Activated CD4-positive, alpha-beta T cell treated with anti-CD3 and anti-CD28 coated beads for 36 hours (primary cell): ENCODE measurements at regions of chr3 and their contacts with region 1.

Region 1: DNA sequence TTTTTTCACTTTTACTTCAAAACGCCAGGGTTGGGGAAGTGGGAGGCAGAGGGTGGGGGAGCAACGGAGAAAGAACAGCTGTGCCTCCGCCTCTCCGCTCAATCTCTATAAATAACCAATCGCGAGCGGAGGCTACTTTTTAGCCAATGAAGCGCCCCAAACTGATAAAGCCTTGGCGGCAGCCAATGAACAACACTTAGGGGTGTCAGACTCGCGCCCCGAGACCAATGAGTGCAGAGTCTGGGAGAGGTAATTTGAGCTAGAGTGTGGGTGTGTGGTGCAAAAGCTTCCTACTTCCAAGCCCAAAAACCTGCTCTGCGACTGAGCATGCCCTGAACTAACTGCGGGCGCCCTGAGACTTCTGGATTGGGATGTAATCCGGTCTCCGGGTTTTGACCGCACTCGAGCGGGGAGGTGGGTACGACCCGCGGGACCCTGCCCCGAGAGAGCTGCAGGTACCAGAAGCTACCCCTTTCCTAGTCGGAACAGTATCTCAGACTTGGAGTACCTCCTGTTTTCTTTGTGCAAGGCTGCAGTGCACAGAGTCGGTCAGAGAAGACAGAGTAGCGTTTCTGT is 800 bp upstream of the RAP2B start:
- DNase-seq: peak; percentile 94
- ATAC-seq: peak; percentile 83
- H3K4me3 Mint-ChIP-seq: peak overlapping the region; percentile 97
- H3K27ac Mint-ChIP-seq: peak overlapping the region; percentile 97
- H3K4me1 Mint-ChIP-seq: peaks cover 32% of the 10 kb centered on the region
- H3K27me3 Mint-ChIP-seq: no peaks in the 10 kb centered on the region

Region 2: GRCh38 chr3:153001210-153002078 is 159.8 kb before region 1 on chr3:
- CTCF ChIA-PET with region 1: no interaction called
- POLR2A ChIA-PET with region 1: no interaction called
- intact Hi-C with region 1: no loop called
- DNase-seq: no peak
- ATAC-seq: no peak
- H3K4me3 Mint-ChIP-seq: no peak overlapping the region
- H3K27ac Mint-ChIP-seq: no peak overlapping the region
- H3K4me1 Mint-ChIP-seq: no peaks in the 10 kb centered on the region
- H3K27me3 Mint-ChIP-seq: peaks cover 2% of the 10 kb centered on the region

Region 3: GRCh38 chr3:153043729-153044328 is 117.4 kb before region 1 on chr3:
- CTCF ChIA-PET with region 1: interaction called, 6 read pairs
- POLR2A ChIA-PET with region 1: no interaction called
- intact Hi-C with region 1: loop called (anchors 1 kb)
- DNase-seq: no peak
- ATAC-seq: no peak
- H3K4me3 Mint-ChIP-seq: peak overlapping the region; percentile 32
- H3K27ac Mint-ChIP-seq: no peak overlapping the region
- H3K4me1 Mint-ChIP-seq: peaks cover 3% of the 10 kb centered on the region
- H3K27me3 Mint-ChIP-seq: peaks cover 2% of the 10 kb centered on the region

Region 4: GRCh38 chr3:153090973-153091372 is 70.3 kb before region 1 on chr3:
- CTCF ChIA-PET with region 1: no interaction called
- POLR2A ChIA-PET with region 1: no interaction called
- intact Hi-C with region 1: no loop called
- DNase-seq: no peak
- ATAC-seq: no peak
- H3K4me3 Mint-ChIP-seq: no peak overlapping the region
- H3K27ac Mint-ChIP-seq: no peak overlapping the region
- H3K4me1 Mint-ChIP-seq: peaks cover 21% of the 10 kb centered on the region
- H3K27me3 Mint-ChIP-seq: no peaks in the 10 kb centered on the region

Region 5: DNA sequence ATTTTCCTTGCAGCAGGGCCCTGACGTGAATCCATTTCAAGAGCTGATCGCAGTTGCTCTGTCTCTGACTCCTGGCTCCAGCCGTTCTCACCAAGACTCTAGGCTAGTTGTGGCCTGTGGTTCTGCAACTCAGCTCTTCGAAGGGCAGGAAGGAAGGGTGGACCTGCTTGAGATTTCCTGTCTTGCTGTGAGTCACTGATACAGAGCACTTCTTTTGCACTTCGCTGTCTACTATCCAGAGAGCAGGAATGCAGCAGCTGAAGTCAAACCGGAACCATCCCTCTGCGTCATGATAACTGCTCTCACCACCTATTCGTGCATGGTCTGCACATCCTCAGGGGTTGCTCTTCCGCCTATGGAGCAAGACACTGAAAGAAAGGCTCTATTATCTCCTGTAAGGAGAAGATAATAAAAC is 60.5 kb after region 1 on chr3:
- CTCF ChIA-PET with region 1: no interaction called
- POLR2A ChIA-PET with region 1: no interaction called
- intact Hi-C with region 1: loop called in 1 of 2 experiments (anchors 2 kb)
- DNase-seq: peak; percentile 68
- ATAC-seq: peak; percentile 97
- H3K4me3 Mint-ChIP-seq: peak overlapping the region; percentile 58
- H3K27ac Mint-ChIP-seq: peak overlapping the region; percentile 88
- H3K4me1 Mint-ChIP-seq: peaks cover 59% of the 10 kb centered on the region
- H3K27me3 Mint-ChIP-seq: no peaks in the 10 kb centered on the region

Region 6: DNA sequence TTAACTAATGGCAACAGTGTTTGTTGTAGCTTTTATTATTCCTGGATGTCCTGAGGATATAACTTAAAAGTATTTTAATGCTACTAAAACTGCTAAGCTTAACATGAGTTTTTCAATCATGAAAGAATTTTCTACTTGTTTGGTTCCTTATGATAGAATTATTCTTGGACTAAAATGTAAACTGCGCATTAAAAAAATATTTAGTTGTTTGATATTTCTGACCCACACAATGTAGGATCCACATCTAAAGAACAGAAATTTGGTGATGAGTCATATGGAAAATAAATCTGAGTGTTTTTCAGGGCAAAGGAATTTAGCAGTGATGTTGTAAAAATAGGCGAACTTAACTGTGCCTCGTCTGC is 71.7 kb after region 1 on chr3:
- CTCF ChIA-PET with region 1: no interaction called
- POLR2A ChIA-PET with region 1: no interaction called
- intact Hi-C with region 1: no loop called
- DNase-seq: no peak
- ATAC-seq: no peak
- H3K4me3 Mint-ChIP-seq: no peak overlapping the region
- H3K27ac Mint-ChIP-seq: no peak overlapping the region
- H3K4me1 Mint-ChIP-seq: peaks cover 8% of the 10 kb centered on the region
- H3K27me3 Mint-ChIP-seq: no peaks in the 10 kb centered on the region

Region 7: GRCh38 chr3:153350420-153350819 is 189.2 kb after region 1 on chr3:
- CTCF ChIA-PET with region 1: no interaction called
- POLR2A ChIA-PET with region 1: no interaction called
- intact Hi-C with region 1: loop called in 1 of 2 experiments (anchors 5 kb)
- DNase-seq: no peak
- ATAC-seq: peak; percentile 51
- H3K4me3 Mint-ChIP-seq: no peak overlapping the region
- H3K27ac Mint-ChIP-seq: no peak overlapping the region
- H3K4me1 Mint-ChIP-seq: peaks cover 2% of the 10 kb centered on the region
- H3K27me3 Mint-ChIP-seq: peaks cover 7% of the 10 kb centered on the region

Region 8: GRCh38 chr3:153595186-153595815 is 434.1 kb after region 1 on chr3:
- CTCF ChIA-PET with region 1: interaction called, 4 read pairs
- POLR2A ChIA-PET with region 1: no interaction called
- intact Hi-C with region 1: loop called in 1 of 2 experiments (anchors 10 kb)
- DNase-seq: no peak
- ATAC-seq: no peak
- H3K4me3 Mint-ChIP-seq: no peak overlapping the region
- H3K27ac Mint-ChIP-seq: no peak overlapping the region
- H3K4me1 Mint-ChIP-seq: no peaks in the 10 kb centered on the region
- H3K27me3 Mint-ChIP-seq: no peaks in the 10 kb centered on the region

Region 9: DNA sequence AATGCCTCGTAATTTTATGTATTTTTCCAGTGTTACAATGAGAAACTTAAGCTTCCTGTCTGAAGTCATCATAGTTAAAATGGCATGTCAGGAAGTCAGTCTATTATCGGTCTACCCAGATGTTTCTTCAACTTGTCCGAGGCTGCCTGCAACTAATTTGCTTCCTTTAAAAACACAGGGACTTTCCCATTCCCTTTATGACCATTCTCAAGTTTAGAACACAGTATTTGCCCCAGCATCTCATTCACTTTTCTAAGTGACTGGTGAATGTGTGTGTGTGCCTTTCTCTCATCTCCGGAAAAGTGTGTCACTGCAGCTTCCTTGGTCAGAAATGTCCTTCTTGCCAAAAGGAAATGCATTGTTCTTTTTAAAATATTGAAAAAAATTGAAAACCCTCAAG is 467.4 kb after region 1 on chr3:
- CTCF ChIA-PET with region 1: interaction called, 3 read pairs
- POLR2A ChIA-PET with region 1: no interaction called
- intact Hi-C with region 1: loop called in 1 of 2 experiments (anchors 5 kb)
- DNase-seq: peak; percentile 8
- ATAC-seq: peak; percentile 27
- H3K4me3 Mint-ChIP-seq: no peak overlapping the region
- H3K27ac Mint-ChIP-seq: peak overlapping the region; percentile 40
- H3K4me1 Mint-ChIP-seq: peaks cover 86% of the 10 kb centered on the region
- H3K27me3 Mint-ChIP-seq: no peaks in the 10 kb centered on the region

Region 10: GRCh38 chr3:154323891-154324738 is 1162.9 kb after region 1 on chr3 and contains the start of gene DHX36:
- CTCF ChIA-PET with region 1: no interaction called
- POLR2A ChIA-PET with region 1: no interaction called
- intact Hi-C with region 1: loop called in 1 of 2 experiments (anchors 1 kb)
- DNase-seq: peak; percentile 93
- ATAC-seq: peak; percentile 91
- H3K4me3 Mint-ChIP-seq: peak within 1 kb of the TSS; percentile 85
- H3K27ac Mint-ChIP-seq: peak within 1 kb of the TSS; percentile 97
- H3K4me1 Mint-ChIP-seq: peaks cover 25% of the 10 kb centered on the region
- H3K27me3 Mint-ChIP-seq: no peaks in the 10 kb centered on the region
- total RNA-seq, gene DHX36: 56.3 to 74.6 TPM